ENCODE measurements at regions of chr5 and their contacts with region 1.

Region 1: GRCh38 chr5:93062548-93062947 is 518.5 kb downstream of the NR2F1-AS1 start:
- DNase-seq: no peak
- ATAC-seq: peak; percentile 65
- H3K4me3 ChIP-seq: no peak overlapping the region
- H3K27ac ChIP-seq: no peak overlapping the region
- H3K4me1 ChIP-seq: no peaks in the 10 kb centered on the region
- H3K27me3 ChIP-seq: no peaks in the 10 kb centered on the region
- CTCF ChIP-seq: peak; percentile 23 to 53 (median 51); a peak in 4 of 6 replicates
- POLR2A ChIP-seq: no peak
- RAD21 ChIP-seq: peak; percentile 34; the same call in 1 of the 2 replicates

Region 2: GRCh38 chr5:92662741-92663140 is 399.8 kb before region 1 on chr5:
- CTCF ChIA-PET with region 1: no interaction called
- POLR2A ChIA-PET with region 1: no interaction called
- RAD21 ChIA-PET with region 1: no interaction called
- intact Hi-C with region 1: no loop called
- DNase-seq: no peak
- ATAC-seq: no peak
- H3K4me3 ChIP-seq: no peak overlapping the region
- H3K27ac ChIP-seq: no peak overlapping the region
- H3K4me1 ChIP-seq: no peaks in the 10 kb centered on the region
- H3K27me3 ChIP-seq: no peaks in the 10 kb centered on the region
- CTCF ChIP-seq: no peak
- POLR2A ChIP-seq: no peak
- RAD21 ChIP-seq: no peak

Region 3: DNA sequence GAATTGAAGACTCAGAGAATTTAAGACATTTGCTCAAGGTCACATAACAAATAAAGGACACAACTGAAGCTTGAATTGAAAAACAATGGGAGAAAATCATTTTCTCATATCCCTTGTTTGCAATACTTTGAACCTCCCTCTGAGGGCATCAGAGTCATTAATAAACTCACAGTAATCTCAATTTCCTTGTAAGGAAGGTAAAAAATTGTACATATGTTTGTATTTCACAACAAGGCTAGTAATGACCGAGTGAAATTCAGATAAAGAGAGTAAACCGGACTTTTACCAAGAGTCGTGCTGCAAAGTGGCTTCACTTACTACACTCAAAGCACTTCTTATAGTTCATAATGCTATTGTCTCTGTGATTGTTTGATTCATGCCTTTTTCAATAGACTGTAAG is 146.5 kb before region 1 on chr5:
- CTCF ChIA-PET with region 1: no interaction called
- POLR2A ChIA-PET with region 1: no interaction called
- RAD21 ChIA-PET with region 1: no interaction called
- intact Hi-C with region 1: loop called (anchors 5 kb)
- DNase-seq: no peak
- ATAC-seq: no peak
- H3K4me3 ChIP-seq: no peak overlapping the region
- H3K27ac ChIP-seq: no peak overlapping the region
- H3K4me1 ChIP-seq: no peaks in the 10 kb centered on the region; a peak in 1 of 4 replicates
- H3K27me3 ChIP-seq: no peaks in the 10 kb centered on the region
- CTCF ChIP-seq: 0 out of 6 replicates have a peak, but pooled peaks of 1 of the 3 experiments have one; percentile 13
- POLR2A ChIP-seq: no peak
- RAD21 ChIP-seq: peak; percentile 60

Region 4: DNA sequence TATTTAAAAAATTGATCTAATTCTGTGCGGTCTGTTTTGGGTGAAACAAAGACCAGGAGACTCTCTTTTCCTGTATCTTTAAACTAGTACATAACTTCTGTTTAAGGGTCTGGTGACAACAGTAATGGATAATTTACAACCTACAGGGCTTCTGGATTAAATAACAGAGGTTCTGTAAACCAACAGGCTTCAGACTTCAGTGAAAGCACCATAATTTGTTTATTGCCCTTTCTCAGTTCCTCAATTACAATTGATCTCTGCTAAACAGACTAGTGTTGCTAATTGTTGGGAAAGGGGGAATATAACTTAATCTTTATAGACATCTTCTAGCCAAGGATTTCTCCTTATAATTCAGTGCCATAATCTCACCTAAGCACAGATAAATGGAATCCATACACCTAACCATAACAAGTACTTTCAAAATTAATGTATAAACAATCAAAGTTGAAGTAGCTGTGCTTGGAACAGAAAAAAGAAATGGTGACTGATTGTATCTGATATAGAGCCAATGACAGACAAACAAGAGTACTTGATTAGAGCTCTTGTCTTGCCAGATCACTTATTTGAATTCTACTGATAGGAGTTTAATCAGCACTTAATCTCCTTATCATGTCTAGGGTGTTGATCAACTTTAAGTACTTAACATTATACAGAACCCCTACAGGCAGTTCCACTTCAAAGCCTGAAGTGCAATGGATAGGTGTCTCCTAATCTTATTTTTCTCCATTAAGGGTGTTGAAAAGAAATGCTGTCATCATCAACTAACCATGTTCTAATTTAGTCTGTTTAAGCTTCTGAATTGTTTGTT is 17.5 kb before region 1 on chr5:
- CTCF ChIA-PET with region 1: no interaction called
- POLR2A ChIA-PET with region 1: no interaction called
- RAD21 ChIA-PET with region 1: no interaction called
- intact Hi-C with region 1: no loop called
- DNase-seq: no peak
- ATAC-seq: no peak
- H3K4me3 ChIP-seq: no peak overlapping the region
- H3K27ac ChIP-seq: no peak overlapping the region
- H3K4me1 ChIP-seq: no peaks in the 10 kb centered on the region
- H3K27me3 ChIP-seq: no peaks in the 10 kb centered on the region
- CTCF ChIP-seq: no peak
- POLR2A ChIP-seq: no peak
- RAD21 ChIP-seq: no peak

Measured in HCT116 (cell line).